HCT116 (cell line): ENCODE measurements at regions of chr3 and their contacts with region 1.

Region 1: DNA sequence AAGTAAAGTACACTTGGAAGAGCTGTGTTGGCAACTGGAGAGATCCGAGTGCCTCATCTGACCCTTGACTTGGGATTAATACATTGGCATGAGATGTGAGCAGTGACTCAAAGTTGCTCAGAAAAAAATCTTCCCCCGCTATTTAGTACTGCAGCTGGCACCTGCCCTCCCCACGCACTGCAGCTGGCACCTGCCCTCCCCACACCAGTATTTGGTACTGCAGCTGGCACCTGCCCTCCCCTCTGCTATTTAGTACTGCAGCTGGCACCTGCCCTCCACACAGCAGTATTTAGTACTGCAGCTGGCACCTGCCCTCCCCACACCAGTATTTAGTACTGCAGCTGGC is 3.9 kb upstream of the MUC20 start:
- DNase-seq: peak; percentile 52
- ATAC-seq: peak; percentile 50
- H3K4me3 ChIP-seq: peak overlapping the region in 1 of 2 experiments; percentile 15; a peak in 1 of 4 replicates
- H3K27ac ChIP-seq: no peak overlapping the region
- H3K4me1 ChIP-seq: peaks cover 31 to 50% of the 10 kb centered on the region in 2 experiments
- H3K27me3 ChIP-seq: no peaks in the 10 kb centered on the region
- CTCF ChIP-seq: no peak
- POLR2A ChIP-seq: no peak
- RAD21 ChIP-seq: no peak

Region 2: GRCh38 chr3:195616712-195617086 is 100.1 kb before region 1 on chr3:
- CTCF ChIA-PET with region 1: no interaction called
- POLR2A ChIA-PET with region 1: no interaction called
- RAD21 ChIA-PET with region 1: no interaction called
- intact Hi-C with region 1: loop called (anchors 5 kb)
- DNase-seq: no peak
- ATAC-seq: no peak
- H3K4me3 ChIP-seq: no peak overlapping the region
- H3K27ac ChIP-seq: no peak overlapping the region
- H3K4me1 ChIP-seq: peaks cover 0 to 4% of the 10 kb centered on the region in 2 experiments; a peak in 1 of 4 replicates
- H3K27me3 ChIP-seq: no peaks in the 10 kb centered on the region
- CTCF ChIP-seq: no peak
- POLR2A ChIP-seq: no peak
- RAD21 ChIP-seq: no peak